WTC11 (cell line): ENCODE measurements at regions of chr12 and their contacts with region 1.

Region 1: DNA sequence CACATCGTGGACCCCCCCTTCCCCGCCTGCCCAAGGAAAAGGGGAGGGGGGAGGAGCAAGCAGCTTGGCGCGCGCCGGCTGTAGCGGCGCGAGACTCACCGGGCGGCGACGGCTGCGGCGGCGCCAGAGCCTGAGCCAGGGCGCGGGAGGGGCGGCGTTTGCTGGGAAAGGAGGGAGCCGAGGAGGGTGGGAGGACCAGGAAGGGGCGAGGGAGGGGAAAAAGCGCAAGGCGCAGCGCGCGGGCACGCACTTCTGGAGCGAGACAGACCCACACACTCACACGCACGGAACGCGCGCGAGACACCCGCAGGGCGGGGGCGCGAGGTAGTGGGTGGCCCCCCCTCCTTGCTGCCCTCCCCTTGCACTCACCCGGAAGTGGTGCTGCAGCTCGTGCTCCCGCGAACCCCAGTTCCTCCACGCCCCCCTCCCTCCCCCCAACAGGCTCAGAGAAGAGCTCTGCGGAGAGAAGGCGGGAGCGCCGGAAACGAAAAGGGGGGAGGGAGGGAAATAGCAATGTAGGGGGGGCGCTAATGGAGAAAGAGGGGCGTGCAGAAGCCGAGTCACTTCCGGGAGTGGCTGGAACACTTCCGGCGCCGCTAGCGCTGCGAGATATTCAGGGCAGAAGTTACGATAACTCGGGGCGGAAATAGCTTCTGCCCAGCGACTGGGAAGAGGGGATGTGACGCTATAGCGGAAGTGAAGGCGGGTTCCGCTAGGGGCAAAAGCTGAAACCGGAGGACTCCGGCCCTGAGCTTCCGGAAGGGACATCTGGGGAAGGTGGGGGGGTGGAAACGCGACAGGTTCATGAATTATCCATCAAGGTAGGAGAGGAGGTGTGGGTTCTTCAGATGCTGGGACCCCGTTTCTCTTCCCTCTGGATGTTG is at the start of gene ZNF384:
- DNase-seq: peak; percentile 95
- ATAC-seq: peak; percentile 81
- H3K4me3 Mint-ChIP-seq: peak within 1 kb of the TSS; percentile 86
- H3K27ac Mint-ChIP-seq: peak within 1 kb of the TSS; percentile 95
- H3K4me1 Mint-ChIP-seq: peaks cover 23% of the 10 kb centered on the region
- H3K27me3 Mint-ChIP-seq: 0 out of 2 replicates have a peak, but pooled peaks cover under 1% of the 10 kb centered on the region
- CTCF ChIP-seq: no peak
- total RNA-seq, gene ZNF384: 63.8 to 64.7 TPM (median 64.4 TPM) in 3 replicates

Region 2: DNA sequence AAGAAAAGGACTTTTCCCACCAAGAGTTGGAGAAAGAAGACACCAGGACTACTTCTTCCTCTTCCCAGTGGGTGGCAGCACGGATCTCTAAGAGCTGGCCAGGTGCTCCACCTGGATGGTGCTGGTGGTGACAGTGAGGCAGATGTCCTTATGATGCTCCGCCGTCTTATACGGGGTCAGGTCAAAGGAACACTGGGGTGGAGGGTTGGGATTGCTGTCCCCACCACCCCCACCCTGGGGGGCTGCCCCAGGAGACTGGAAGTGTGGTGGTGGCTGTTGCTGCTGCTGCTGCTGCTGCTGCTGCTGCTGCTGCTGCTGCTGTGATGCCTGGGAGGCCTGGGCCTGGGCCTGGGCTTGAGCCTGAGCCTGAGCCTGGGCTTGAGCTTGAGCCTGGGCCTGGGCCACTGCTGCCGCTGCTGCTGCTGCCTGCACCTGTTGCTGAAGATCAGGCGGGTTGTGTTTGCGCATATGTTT is 21.6 kb before region 1 on chr12:
- CTCF ChIA-PET with region 1: interaction called, 20 read pairs
- POLR2A ChIA-PET with region 1: interaction called, 5 read pairs
- DNase-seq: peak; percentile 22
- ATAC-seq: peak; percentile 26
- H3K4me3 Mint-ChIP-seq: no peak overlapping the region
- H3K27ac Mint-ChIP-seq: no peak overlapping the region
- H3K4me1 Mint-ChIP-seq: no peaks in the 10 kb centered on the region; the same call in 1 of the 2 replicates
- H3K27me3 Mint-ChIP-seq: no peaks in the 10 kb centered on the region; the same call in 1 of the 2 replicates
- CTCF ChIP-seq: no peak

Region 3: GRCh38 chr12:7060353-7060954 is 371.2 kb after region 1 on chr12 and contains the start of gene C1S:
- CTCF ChIA-PET with region 1: no interaction called
- POLR2A ChIA-PET with region 1: no interaction called
- DNase-seq: peak; percentile 42
- ATAC-seq: peak; percentile 92
- H3K4me3 Mint-ChIP-seq: peak within 1 kb of the TSS; percentile 46
- H3K27ac Mint-ChIP-seq: peak within 1 kb of the TSS; percentile 27; the same call in 1 of the 2 replicates
- H3K4me1 Mint-ChIP-seq: peaks cover 17% of the 10 kb centered on the region
- H3K27me3 Mint-ChIP-seq: peaks cover 2% of the 10 kb centered on the region; the same call in 1 of the 2 replicates
- CTCF ChIP-seq: no peak
- total RNA-seq, gene C1S: 6.2 to 8.8 TPM (median 7.6 TPM) in 3 replicates